CD4-positive, alpha-beta memory T cell (primary cell): ENCODE measurements at regions of chr18 and their contacts with region 1.

Region 1: GRCh38 chr18:59358712-59359575 is at the start of gene LMAN1:
- DNase-seq: peak; percentile 85 to 88 (median 87)
- H3K4me3 ChIP-seq: peak within 1 kb of the TSS; percentile 76 to 92
- H3K4me3 Mint-ChIP-seq: peak within 1 kb of the TSS; percentile 91 to 100 (median 98)
- H3K27ac ChIP-seq: peak within 1 kb of the TSS; percentile 95
- H3K27ac Mint-ChIP-seq: peak within 1 kb of the TSS; percentile 91 to 99 (median 97)
- H3K4me1 ChIP-seq: peaks cover 38% of the 10 kb centered on the region
- H3K4me1 Mint-ChIP-seq: peaks cover 23 to 52% (median 35%) of the 10 kb centered on the region in 4 donors
- H3K27me3 ChIP-seq: no peaks in the 10 kb centered on the region
- H3K27me3 Mint-ChIP-seq: peaks cover 0 to 2% of the 10 kb centered on the region in 2 donors
- total RNA-seq, gene LMAN1: 55.7 to 59.6 TPM

Region 2: DNA sequence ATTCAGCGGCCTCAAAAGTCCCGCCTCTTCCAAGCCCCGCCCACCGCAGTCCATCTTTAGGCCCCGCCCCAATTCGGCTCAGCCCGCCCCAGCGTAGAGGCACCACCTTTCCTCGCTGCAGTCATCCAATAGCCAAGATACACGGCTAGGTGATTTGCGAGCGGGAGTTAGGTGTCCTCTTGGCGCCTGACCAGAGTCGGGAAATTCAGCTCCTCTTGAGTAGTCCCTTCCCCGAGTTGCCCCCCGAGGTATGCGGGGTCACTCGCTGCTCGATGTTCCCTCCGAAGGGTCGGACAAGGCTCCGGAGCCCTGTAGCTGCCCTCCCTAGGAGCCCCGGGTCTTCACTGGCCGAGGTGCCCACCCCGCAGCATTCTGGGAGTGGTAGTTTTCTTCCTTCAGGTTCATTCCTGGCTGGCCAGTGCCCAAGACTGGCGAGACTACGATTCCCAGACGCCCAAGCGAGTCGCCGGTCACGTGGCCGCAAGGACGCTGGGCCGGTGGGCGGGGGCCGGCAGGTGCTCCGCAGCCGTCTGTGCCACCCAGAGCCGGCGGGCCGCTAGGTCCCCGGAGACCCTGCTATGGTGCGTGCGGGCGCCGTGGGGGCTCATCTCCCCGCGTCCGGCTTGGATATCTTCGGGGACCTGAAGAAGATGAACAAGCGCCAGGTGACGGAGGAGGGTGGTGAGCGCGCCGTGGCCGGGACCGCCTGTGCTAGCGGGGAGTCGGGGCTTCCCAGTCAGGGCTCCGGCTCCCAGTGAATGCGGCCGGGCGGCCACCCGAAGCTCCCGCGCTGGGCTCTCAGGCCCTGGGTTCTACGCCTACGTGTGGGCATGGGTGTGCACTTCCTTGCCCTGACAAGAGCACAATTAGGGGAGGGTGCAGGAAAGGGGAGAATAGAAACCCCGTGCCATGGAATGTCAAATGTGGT is 219.3 kb before region 1 on chr18 and contains the start of gene SEC11C:
- CTCF ChIA-PET with region 1: no interaction called
- POLR2A ChIA-PET with region 1: interaction called, 3 read pairs
- intact Hi-C with region 1: loop called (anchors 1 kb)
- DNase-seq: peak; percentile 98 to 99 (median 98)
- H3K4me3 ChIP-seq: peak within 1 kb of the TSS; percentile 59 to 88
- H3K4me3 Mint-ChIP-seq: peak within 1 kb of the TSS; percentile 92 to 97 (median 95)
- H3K27ac ChIP-seq: peak within 1 kb of the TSS; percentile 91
- H3K27ac Mint-ChIP-seq: peak within 1 kb of the TSS; percentile 99 to 100 (median 100)
- H3K4me1 ChIP-seq: peaks cover 45% of the 10 kb centered on the region
- H3K4me1 Mint-ChIP-seq: peaks cover 29 to 53% (median 39%) of the 10 kb centered on the region in 4 donors
- H3K27me3 ChIP-seq: no peaks in the 10 kb centered on the region
- H3K27me3 Mint-ChIP-seq: peaks cover 6 to 7% of the 10 kb centered on the region in 2 donors
- total RNA-seq, gene SEC11C: 85.1 to 89.3 TPM